AG04449 (cell line): ENCODE measurements at regions of chr5 and their contacts with region 1.

Region 1: DNA sequence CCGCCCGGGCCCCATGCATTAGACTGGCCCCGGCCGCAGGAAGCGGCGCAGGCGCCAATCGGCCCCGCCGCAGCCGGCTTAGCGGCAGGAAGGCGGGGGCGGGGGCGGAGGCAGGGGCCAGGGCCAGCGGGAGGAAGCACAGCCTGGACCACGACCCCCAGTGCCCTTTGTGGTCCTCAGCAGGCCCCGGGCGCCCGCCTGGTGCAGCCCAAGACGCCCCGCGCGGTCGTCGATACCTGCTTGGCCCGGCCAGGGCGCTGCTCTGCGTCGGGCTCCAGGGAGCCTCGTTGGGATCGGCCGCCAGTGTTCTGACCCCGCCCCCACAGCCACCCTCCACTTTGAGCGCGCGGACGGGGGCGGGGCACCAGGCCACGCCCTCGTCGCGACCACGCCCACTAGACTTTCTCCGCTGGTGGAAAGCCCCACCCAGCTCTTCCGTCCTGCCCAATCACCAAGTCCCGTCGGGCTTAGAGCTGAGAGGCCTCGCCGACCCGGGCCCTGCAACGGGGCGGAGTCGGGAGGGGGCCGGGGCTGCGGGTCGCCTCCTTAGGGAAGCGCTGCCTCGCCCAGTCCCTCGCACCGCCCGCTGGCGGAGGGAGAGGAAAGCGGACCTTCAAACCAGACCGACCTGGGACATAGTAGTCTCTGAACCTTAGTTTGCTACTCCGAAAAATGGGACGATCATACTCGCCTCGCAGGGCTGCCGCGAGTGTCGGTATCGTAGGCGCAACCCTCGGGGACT is at the start of gene PDLIM7:
- DNase-seq: peak; percentile 87
- H3K4me3 ChIP-seq: peak within 1 kb of the TSS; percentile 93
- CTCF ChIP-seq: peak; percentile 15

Region 2: GRCh38 chr5:177241768-177242167 is 255.7 kb before region 1 on chr5:
- CTCF ChIA-PET with region 1: no interaction called
- POLR2A ChIA-PET with region 1: no interaction called
- DNase-seq: no peak
- H3K4me3 ChIP-seq: no peak overlapping the region
- CTCF ChIP-seq: no peak

Region 3: GRCh38 chr5:177311723-177312648 is 185.5 kb before region 1 on chr5 and contains the start of gene MXD3:
- CTCF ChIA-PET with region 1: interaction called, 52 read pairs
- POLR2A ChIA-PET with region 1: interaction called, 15 read pairs
- DNase-seq: no peak
- H3K4me3 ChIP-seq: peak within 1 kb of the TSS; percentile 68
- CTCF ChIP-seq: no peak

Region 4: DNA sequence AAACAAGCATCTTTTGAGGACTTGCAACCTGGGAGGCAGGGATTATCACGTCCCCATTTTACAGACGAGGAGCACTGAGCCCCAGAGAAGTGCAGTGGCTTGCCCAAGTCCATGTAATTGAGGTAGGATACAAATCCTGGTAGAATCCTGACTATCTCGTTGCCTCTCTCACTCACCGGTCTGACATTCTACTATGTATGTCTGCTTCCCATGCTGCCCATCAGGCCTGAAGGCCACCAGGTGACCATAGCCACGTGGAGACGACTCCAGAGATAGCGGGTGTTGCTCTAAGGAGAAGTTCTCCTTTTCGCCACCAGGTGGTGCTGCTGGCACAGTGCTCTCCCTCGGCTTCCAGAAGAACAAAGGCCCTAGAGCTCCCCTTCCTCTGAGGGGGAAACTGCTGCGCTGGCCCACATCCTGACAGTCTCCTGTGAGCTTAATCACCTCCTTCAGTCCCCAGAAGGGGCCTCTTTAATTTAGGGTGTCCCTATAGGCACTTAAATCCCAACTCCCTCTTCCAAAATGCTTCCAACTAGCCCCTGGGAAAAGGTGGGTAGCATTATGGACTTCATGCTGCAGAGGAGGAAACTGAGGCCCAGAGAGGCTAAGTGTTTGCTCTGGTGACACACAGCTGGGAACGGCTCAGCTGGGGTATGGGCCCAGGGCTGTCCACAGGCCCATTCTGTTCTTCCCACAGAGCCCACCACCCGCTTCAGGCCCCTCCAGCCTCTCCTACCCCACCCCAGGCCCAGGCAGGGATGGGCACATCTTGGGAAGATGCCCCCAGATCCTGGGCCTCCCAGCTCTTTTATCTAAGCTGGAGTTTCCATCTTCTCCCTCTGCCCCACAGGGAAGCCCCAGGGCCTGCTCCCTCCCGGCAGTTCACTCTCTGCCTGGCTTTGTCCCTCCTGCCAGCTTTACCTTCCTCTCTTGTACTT is 106.8 kb before region 1 on chr5:
- CTCF ChIA-PET with region 1: interaction called, 92 read pairs
- POLR2A ChIA-PET with region 1: interaction called, 3 read pairs
- DNase-seq: no peak
- H3K4me3 ChIP-seq: no peak overlapping the region
- CTCF ChIP-seq: peak; percentile 89

Region 5: DNA sequence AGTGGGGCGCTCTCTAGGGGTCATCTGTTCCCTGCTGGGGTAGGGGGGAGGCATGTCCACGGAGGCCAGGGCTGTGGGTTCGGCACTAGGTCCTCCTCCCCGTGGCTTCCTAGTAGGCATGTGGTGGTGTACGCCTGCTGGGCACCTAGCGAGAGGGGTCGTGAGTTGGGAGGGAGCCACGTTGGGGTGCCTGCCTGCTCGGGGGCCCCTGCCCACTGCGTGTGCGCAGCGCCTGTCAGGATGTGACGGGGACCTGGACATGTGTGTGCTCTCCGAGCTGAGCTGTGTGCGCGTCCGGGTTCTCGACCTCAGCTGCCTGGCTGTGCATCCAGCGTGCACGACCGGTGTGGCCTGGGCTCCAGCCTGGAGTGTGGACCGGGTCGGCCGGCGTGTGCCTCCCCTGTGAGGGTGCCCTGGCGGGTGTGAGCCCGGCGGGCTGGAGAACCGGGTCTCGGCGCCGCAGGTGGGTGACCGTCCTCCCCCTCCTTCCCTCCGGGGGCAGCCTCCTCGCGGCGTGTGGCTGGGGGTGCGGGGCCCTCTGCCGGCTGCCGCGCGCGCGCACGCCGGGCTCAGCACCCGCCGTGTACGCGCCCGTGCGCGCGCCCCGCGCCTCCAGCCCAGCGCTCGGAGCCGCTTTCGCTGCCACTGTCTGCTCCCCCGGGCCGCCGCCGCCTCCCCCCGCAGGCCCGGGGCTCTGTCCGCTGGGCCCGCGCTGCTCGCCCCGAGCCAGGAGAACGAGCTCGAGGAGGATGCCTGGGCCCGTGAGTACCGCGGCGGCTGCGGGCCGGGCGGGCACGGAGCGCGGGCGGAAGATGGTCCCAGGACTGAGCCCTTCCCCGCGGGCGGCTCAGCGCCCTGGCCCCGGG is 51.0 kb before region 1 on chr5 and contains the start of gene PRR7:
- CTCF ChIA-PET with region 1: interaction called, 13 read pairs
- POLR2A ChIA-PET with region 1: interaction called, 8 read pairs
- DNase-seq: no peak
- H3K4me3 ChIP-seq: peak within 1 kb of the TSS; percentile 69
- CTCF ChIP-seq: no peak

Region 6: GRCh38 chr5:177473461-177474001 is 23.9 kb before region 1 on chr5 and contains the start of gene DBN1:
- CTCF ChIA-PET with region 1: interaction called, 261 read pairs
- POLR2A ChIA-PET with region 1: interaction called, 401 read pairs
- DNase-seq: no peak
- H3K4me3 ChIP-seq: peak within 1 kb of the TSS; percentile 89
- CTCF ChIP-seq: no peak

Region 7: GRCh38 chr5:177516604-177517568 is 19.4 kb after region 1 on chr5 and contains the start of gene DDX41:
- CTCF ChIA-PET with region 1: interaction called, 105 read pairs
- POLR2A ChIA-PET with region 1: interaction called, 22 read pairs
- DNase-seq: peak; percentile 94
- H3K4me3 ChIP-seq: peak within 1 kb of the TSS; percentile 100
- CTCF ChIP-seq: peak; percentile 11

Region 8: GRCh38 chr5:177546258-177546741 is 48.8 kb after region 1 on chr5:
- CTCF ChIA-PET with region 1: interaction called, 12 read pairs
- POLR2A ChIA-PET with region 1: interaction called, 13 read pairs
- DNase-seq: peak; percentile 94
- H3K4me3 ChIP-seq: no peak overlapping the region
- CTCF ChIP-seq: peak; percentile 17

Region 9: DNA sequence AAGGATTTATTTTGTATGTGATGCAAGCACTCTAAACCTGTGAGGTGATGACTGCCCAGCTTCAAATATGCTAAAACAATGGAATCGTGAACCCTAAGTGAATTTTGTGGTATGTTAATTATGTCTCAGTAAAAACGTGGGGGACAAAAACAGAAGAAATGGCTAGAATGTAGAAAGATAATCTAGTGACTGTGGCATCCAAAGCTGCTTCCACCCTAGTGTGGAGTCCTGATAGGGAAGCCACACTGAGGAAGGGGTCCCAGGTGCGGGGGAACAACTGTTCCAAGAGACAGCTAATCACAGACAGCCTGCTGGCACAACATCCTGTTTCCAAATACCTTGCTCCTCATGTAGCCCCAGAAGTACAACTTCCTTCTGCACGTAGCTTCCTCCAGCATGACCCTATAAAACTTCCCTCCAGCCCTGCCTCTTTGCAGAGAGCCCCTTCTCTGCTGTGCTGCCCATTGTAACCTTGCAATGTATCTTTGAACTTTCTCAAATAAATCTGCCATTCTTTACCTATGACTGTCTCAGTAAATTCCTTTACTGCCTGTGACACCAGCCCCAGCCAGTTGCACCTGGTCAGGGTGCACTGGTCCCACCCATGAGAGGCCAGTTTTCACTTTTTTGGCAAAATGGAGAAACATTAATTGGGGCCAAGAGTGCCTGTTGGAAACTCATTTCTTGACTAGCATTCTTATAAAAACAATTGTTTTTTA is 684.9 kb after region 1 on chr5:
- CTCF ChIA-PET with region 1: no interaction called
- POLR2A ChIA-PET with region 1: no interaction called
- DNase-seq: no peak
- H3K4me3 ChIP-seq: no peak overlapping the region
- CTCF ChIP-seq: no peak